Adrenal gland (tissue), 19 donors: ENCODE measurements at regions of chrX and their contacts with region 1.

Region 1: DNA sequence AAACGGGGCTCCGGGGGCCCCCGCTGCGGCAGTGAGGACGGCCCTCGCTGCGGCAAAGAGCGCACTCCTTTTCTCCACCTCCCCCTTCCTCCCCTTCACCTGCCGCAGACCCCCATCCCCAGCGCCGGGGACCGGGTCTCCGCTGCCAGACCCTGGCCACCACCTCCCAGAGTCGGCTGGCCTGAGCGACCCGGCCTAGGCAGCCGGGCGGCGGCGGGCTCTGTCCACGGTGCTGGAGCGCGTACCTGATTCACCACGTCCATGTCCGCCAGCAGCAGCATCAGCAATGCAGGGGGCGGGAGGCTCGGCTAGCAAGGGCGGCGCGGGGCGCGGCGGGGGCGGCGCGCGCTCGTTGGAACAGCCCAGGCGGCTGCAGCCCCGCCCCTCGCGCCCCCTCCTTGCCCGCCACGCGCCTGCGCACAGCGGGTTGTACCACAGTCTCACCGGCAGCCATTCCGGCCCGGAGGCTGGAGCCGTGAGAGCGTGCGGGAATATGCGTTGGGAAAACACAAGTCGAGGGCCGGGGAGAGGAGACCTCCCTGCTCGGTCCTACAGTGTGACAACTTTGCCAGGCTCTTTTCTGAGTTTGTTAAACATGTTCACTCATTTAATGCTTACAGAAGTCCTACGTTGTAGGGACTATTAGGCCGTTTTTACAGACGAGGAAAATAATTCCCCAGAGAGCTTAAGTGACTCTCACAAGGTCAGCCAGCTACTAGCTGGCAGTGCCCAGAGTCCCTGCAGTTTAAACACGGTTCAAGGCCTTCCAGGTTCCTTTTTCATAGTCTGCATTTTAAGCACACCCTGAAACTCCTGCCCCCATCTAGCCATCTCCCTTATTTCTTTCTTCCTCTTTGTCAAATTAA is at the start of gene SYP:
- DNase-seq: peak; percentile 89 to 95 (median 92)
- H3K4me3 ChIP-seq: peak within 1 kb of the TSS in 1 of 4 donors; percentile 37
- H3K27ac ChIP-seq: peak within 1 kb of the TSS in 3 of 5 donors; percentile 66 to 86 (median 83)
- H3K4me1 ChIP-seq: no peaks in the 10 kb centered on the region
- H3K27me3 ChIP-seq: no peaks in the 10 kb centered on the region
- CTCF ChIP-seq: no peak
- POLR2A ChIP-seq: peak; percentile 77 to 89
- total RNA-seq, gene SYP: 6.8 to 147 (median 18.5) TPM

Region 2: GRCh38 chrX:49053223-49054072 is 146.7 kb before region 1 on chrX:
- intact Hi-C with region 1: no loop called
- DNase-seq: peak in 6 of 7 donors; percentile 49 to 59 (median 52)
- H3K4me3 ChIP-seq: peak overlapping the region in 2 of 4 donors; percentile 40 to 79
- H3K27ac ChIP-seq: peak overlapping the region in 4 of 5 donors; percentile 60 to 91 (median 72)
- H3K4me1 ChIP-seq: no peaks in the 10 kb centered on the region
- H3K27me3 ChIP-seq: no peaks in the 10 kb centered on the region
- CTCF ChIP-seq: no peak
- POLR2A ChIP-seq: peak; percentile 27 to 28

Region 3: GRCh38 chrX:49139713-49140112 is 60.4 kb before region 1 on chrX:
- intact Hi-C with region 1: no loop called
- DNase-seq: no peak
- H3K4me3 ChIP-seq: no peak overlapping the region
- H3K27ac ChIP-seq: no peak overlapping the region
- H3K4me1 ChIP-seq: no peaks in the 10 kb centered on the region
- H3K27me3 ChIP-seq: no peaks in the 10 kb centered on the region
- CTCF ChIP-seq: no peak
- POLR2A ChIP-seq: no peak

Region 4: DNA sequence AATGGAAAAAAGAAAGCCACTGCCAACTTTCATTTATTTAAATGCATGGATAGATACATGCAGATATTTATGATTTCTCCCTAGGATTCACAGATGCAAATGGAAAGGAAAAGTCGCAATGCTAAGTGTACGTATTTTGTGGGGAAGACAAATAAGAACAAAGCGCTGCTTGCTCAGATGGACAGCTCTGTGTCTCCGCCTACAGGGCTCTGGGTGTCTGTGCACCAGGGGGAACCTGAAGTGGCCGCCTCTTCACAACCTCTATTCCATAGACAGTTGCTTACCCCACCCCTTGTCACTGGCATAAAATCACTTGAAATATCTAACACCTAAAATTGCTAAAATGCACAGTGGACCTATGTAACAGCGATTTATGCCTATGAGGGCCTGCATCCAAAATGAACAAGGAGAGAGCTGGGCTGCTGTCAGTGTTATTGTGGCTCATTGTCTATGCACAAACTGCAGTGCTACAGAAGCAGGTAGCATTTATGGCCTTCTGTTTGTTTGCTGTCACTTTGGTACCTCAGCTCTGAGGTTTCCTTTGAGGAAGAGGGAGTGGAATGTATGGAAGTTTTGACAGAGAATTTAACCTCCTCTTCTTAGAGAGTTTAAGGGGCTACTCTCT is 554.2 kb after region 1 on chrX:
- intact Hi-C with region 1: loop called in 1 of 2 experiments (anchors 5 kb)
- DNase-seq: peak; percentile 30 to 77 (median 51)
- H3K4me3 ChIP-seq: no peak overlapping the region
- H3K27ac ChIP-seq: no peak overlapping the region
- H3K4me1 ChIP-seq: no peaks in the 10 kb centered on the region
- H3K27me3 ChIP-seq: peaks cover 25% of the 10 kb centered on the region
- CTCF ChIP-seq: peak; percentile 55 to 72 (median 63)
- POLR2A ChIP-seq: no peak